ENCODE measurements at regions of chrX and their contacts with region 1.

Region 1: GRCh38 chrX:37926700-37927099 is 79.3 kb upstream of the DYNLT3 start:
- DNase-seq: no peak
- H3K4me3 ChIP-seq: no peak overlapping the region
- H3K27ac ChIP-seq: no peak overlapping the region
- H3K4me1 ChIP-seq: no peaks in the 10 kb centered on the region
- H3K27me3 ChIP-seq: peaks cover 8% of the 10 kb centered on the region
- CTCF ChIP-seq: peak in 5 of 6 experiments; percentile 52 to 68 (median 59)
- POLR2A ChIP-seq: no peak

Region 2: GRCh38 chrX:38175140-38175539 is 248.4 kb after region 1 on chrX:
- intact Hi-C with region 1: loop called in 1 of 2 experiments (anchors 5 kb)
- DNase-seq: peak; percentile 28 to 56 (median 38)
- H3K4me3 ChIP-seq: no peak overlapping the region
- H3K27ac ChIP-seq: no peak overlapping the region
- H3K4me1 ChIP-seq: no peaks in the 10 kb centered on the region
- H3K27me3 ChIP-seq: peaks cover 15% of the 10 kb centered on the region
- CTCF ChIP-seq: peak; percentile 23 to 66 (median 50)
- POLR2A ChIP-seq: no peak

Measured in adrenal gland (tissue), 19 donors.